IMR-90 (cell line): ENCODE measurements at regions of chr3 and their contacts with region 1.

Region 1: DNA sequence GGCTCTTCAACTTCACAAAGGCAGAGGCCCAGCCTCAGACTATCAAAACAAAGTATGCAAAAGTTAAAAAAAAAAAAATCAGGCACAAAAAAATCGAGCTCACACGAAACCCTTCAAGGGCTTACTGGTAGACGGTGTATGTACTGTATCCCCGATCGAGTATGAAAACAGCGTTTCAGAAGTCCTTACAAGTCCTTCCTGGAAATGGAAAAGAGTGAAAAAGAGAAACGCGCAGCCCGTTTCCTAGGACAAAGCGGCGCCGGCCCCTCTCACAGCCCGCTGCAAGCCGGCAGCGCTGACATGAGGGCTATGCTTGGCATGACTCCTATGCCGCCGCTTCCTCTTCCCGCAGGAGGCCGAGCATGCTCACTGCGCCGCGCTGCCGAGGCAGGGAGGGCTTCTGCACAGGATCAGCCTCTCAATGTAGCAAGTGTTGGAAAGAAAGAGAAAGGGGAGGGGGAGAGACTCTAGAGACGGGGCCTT is at the start of gene VGLL4:
- DNase-seq: peak; percentile 94
- ATAC-seq: peak; percentile 82
- H3K4me3 ChIP-seq: peak within 1 kb of the TSS; percentile 90
- H3K27ac ChIP-seq: peak within 1 kb of the TSS; percentile 100
- H3K4me1 ChIP-seq: peaks cover 16% of the 10 kb centered on the region
- H3K27me3 ChIP-seq: no peaks in the 10 kb centered on the region
- CTCF ChIP-seq: peak; percentile 23
- POLR2A ChIP-seq: peak; percentile 93
- RAD21 ChIP-seq: peak; percentile 52
- total RNA-seq, gene VGLL4: 26.2 and 34.2 TPM in 2 replicates

Region 2: DNA sequence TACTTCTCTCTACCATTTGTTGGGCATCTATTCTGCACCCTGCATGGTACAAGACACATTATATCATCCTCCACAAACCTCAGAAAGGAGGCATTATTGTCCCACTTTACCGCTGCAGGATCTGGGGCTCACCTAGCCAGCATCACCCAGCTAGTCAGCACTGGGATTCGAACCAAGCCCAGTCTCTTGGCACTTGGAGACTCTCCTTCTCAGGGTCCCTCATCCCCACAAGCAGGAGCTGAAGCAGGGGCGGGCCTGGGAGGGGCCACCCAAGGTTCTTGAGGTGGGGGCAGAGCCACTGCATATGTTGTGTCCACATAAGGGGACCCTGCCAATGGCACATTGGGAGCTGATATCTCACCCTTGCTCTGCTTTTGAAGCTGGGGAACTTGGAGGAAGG is 609.8 kb before region 1 on chr3:
- CTCF ChIA-PET with region 1: no interaction called
- POLR2A ChIA-PET with region 1: no interaction called
- dilution Hi-C with region 1: no loop called
- in situ Hi-C with region 1: no loop called
- intact Hi-C with region 1: no loop called
- DNase-seq: no peak
- ATAC-seq: no peak
- H3K4me3 ChIP-seq: no peak overlapping the region
- H3K27ac ChIP-seq: no peak overlapping the region
- H3K4me1 ChIP-seq: no peaks in the 10 kb centered on the region
- H3K27me3 ChIP-seq: peaks cover 21% of the 10 kb centered on the region
- CTCF ChIP-seq: no peak
- POLR2A ChIP-seq: no peak
- RAD21 ChIP-seq: no peak

Region 3: GRCh38 chr3:11168881-11169805 is 474.5 kb before region 1 on chr3:
- CTCF ChIA-PET with region 1: no interaction called
- POLR2A ChIA-PET with region 1: interaction called, 12 read pairs
- dilution Hi-C with region 1: no loop called
- in situ Hi-C with region 1: no loop called
- intact Hi-C with region 1: no loop called
- DNase-seq: peak; percentile 67
- ATAC-seq: peak; percentile 40
- H3K4me3 ChIP-seq: no peak overlapping the region
- H3K27ac ChIP-seq: peak overlapping the region; percentile 74
- H3K4me1 ChIP-seq: peaks cover 29% of the 10 kb centered on the region
- H3K27me3 ChIP-seq: no peaks in the 10 kb centered on the region
- CTCF ChIP-seq: no peak
- POLR2A ChIP-seq: no peak
- RAD21 ChIP-seq: no peak

Region 4: DNA sequence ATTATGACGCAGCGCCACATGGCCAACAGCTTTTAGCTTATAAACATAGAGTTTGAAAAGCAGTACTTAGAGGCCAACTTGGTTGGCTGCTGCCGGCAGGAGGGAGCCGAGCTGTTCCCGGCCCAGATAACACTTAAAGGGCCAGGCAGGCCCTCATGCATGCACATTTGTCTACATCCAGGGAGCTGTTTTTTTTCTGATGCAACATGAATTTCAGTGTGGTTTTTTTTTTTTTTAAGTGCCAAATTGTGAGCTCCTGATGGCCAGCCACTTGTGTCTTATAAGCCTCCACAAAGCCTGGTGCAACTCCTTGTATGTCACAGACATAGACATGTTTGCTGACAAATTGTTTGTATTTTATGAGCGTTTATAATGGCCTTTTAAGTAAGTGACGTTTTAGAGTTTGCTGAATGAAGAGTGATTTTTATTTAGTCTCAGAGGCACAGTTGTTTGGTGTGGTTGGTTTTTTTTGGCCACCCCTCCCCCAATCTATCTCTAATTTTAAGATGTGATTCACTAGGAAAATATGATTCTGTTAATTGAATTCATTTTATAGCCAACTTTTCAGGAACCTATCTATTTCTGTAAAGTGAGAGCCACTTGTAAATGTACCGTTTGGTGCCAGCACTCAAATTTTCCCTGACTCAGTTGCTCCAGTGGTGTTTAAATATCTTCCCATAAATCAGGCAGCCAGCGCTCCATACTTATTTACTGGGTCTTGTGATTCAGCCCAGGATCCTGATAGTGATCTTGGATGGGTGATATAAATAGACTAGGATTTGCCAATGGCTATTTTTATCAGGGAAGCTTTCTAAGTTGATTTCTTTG is 134.3 kb before region 1 on chr3:
- CTCF ChIA-PET with region 1: no interaction called
- POLR2A ChIA-PET with region 1: no interaction called
- dilution Hi-C with region 1: no loop called
- in situ Hi-C with region 1: no loop called
- intact Hi-C with region 1: loop called (anchors 2 kb)
- DNase-seq: peak; percentile 96
- ATAC-seq: peak; percentile 91
- H3K4me3 ChIP-seq: no peak overlapping the region
- H3K27ac ChIP-seq: peak overlapping the region; percentile 93; the same call in 1 of the 2 replicates
- H3K4me1 ChIP-seq: peaks cover 22% of the 10 kb centered on the region
- H3K27me3 ChIP-seq: no peaks in the 10 kb centered on the region
- CTCF ChIP-seq: no peak; the same call in 1 of the 2 replicates
- POLR2A ChIP-seq: peak; percentile 45; the same call in 1 of the 2 replicates
- RAD21 ChIP-seq: peak; percentile 34

Region 5: DNA sequence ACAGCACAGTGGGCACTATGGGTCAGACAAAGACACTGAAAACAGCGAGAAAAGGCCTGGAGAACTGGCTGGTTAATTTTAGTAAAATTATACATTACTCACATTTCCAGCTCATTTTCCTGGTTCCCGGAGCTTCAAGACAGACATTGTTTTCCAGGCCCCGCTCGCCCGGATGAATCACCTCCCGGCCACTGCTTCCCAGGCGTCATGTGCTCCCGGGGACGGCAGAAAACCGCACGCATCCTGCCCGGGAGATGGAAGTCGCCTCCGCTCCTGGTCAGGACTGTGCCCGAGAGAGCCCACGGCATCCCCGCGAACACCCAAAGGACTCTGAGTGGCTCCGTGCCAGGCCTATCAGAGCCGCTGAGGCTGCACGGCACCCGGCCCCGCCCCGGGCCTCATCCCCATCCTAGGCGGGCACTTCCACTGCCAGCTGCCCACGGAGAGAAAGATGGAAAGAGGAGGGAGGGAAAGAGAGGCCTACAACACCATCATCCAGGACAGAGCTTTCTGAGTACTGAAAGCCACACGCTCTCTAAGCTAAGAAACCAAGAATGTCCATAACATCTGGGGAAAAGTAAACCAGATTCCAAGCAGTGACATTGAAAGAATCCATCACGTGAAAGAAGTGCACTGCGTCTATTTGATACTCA is 75.0 kb before region 1 on chr3:
- CTCF ChIA-PET with region 1: no interaction called
- POLR2A ChIA-PET with region 1: no interaction called
- dilution Hi-C with region 1: no loop called
- in situ Hi-C with region 1: loop called (anchors 10 kb)
- intact Hi-C with region 1: loop called (anchors 1 kb)
- DNase-seq: peak; percentile 93
- ATAC-seq: peak; percentile 80
- H3K4me3 ChIP-seq: peak overlapping the region; percentile 15; the same call in 1 of the 2 replicates
- H3K27ac ChIP-seq: peak overlapping the region; percentile 93
- H3K4me1 ChIP-seq: peaks cover 27% of the 10 kb centered on the region
- H3K27me3 ChIP-seq: no peaks in the 10 kb centered on the region
- CTCF ChIP-seq: no peak
- POLR2A ChIP-seq: peak; percentile 34
- RAD21 ChIP-seq: peak; percentile 36

Region 6: DNA sequence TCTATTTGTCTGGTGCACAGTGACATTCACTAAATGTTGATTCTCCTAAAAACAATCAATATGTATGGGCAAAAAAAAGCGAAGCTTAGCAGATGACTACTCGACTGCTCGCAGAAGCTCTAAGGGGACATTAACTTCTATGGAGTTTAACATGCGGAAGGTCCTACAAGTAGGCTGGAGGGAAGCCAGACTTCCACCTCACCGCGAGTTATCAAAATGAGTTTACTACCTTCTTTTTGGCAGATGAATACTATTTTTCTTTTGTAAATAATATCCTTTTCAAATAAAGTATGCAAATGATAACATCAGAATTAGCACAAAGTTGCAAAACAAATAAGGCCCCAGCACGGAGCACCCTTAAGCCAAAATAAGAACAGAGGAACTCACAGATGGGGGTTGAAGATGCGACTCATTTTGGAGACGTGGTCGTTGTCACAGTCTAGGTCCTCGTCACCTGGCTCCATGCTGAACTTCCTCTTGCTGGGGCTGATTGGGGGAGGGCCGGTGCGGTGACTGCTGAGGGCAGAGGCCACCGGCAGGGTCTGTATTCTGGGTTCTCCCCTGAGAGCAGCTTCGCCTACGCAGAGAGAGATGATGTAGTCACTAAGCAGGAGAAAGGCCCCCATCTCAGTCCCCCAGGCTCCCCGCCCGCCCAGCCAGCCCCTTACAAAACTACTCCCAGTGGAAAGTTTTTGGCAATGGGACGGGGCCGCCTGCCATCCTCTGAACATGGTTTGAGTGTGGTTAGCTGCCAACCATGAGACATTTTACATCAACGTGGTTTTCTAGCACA is 42.0 kb before region 1 on chr3:
- CTCF ChIA-PET with region 1: no interaction called
- POLR2A ChIA-PET with region 1: interaction called, 5 read pairs
- dilution Hi-C with region 1: no loop called
- in situ Hi-C with region 1: loop called (anchors 5 kb)
- intact Hi-C with region 1: loop called (anchors 1 kb)
- DNase-seq: peak; percentile 39
- ATAC-seq: no peak
- H3K4me3 ChIP-seq: no peak overlapping the region
- H3K27ac ChIP-seq: peak overlapping the region; percentile 88
- H3K4me1 ChIP-seq: peaks cover 30% of the 10 kb centered on the region
- H3K27me3 ChIP-seq: no peaks in the 10 kb centered on the region
- CTCF ChIP-seq: no peak
- POLR2A ChIP-seq: no peak; the same call in 1 of the 2 replicates
- RAD21 ChIP-seq: no peak